CD14-positive monocyte (primary cell): ENCODE measurements at regions of chr3 and their contacts with region 1.

Region 1: GRCh38 chr3:58271901-58272501 is 34.0 kb upstream of the RPP14 start:
- DNase-seq: peak; percentile 57 to 71 (median 60)
- H3K4me3 ChIP-seq: no peak overlapping the region
- H3K4me3 Mint-ChIP-seq: no peak overlapping the region
- H3K27ac ChIP-seq: peak overlapping the region; percentile 38 to 75
- H3K27ac Mint-ChIP-seq: peak overlapping the region; percentile 78 to 91 (median 85)
- H3K4me1 ChIP-seq: peaks cover 28 to 33% of the 10 kb centered on the region in 2 donors
- H3K4me1 Mint-ChIP-seq: peaks cover 34% of the 10 kb centered on the region
- H3K27me3 ChIP-seq: no peaks in the 10 kb centered on the region
- H3K27me3 Mint-ChIP-seq: peaks cover 0 to 2% (median 0%) of the 10 kb centered on the region in 3 donors
- CTCF ChIP-seq: no peak

Region 2: GRCh38 chr3:58013973-58014649 is 257.9 kb before region 1 on chr3:
- intact Hi-C with region 1: no loop called
- DNase-seq: no peak
- H3K4me3 ChIP-seq: no peak overlapping the region
- H3K4me3 Mint-ChIP-seq: no peak overlapping the region
- H3K27ac ChIP-seq: no peak overlapping the region
- H3K27ac Mint-ChIP-seq: no peak overlapping the region
- H3K4me1 ChIP-seq: peaks cover 12 to 13% of the 10 kb centered on the region in 2 donors
- H3K4me1 Mint-ChIP-seq: peaks cover 35% of the 10 kb centered on the region
- H3K27me3 ChIP-seq: no peaks in the 10 kb centered on the region
- H3K27me3 Mint-ChIP-seq: peaks cover 0 to 3% (median 2%) of the 10 kb centered on the region in 3 donors
- CTCF ChIP-seq: no peak

Region 3: GRCh38 chr3:58237238-58237940 is 34.6 kb before region 1 on chr3 and contains the start of gene ABHD6:
- intact Hi-C with region 1: loop called in 1 of 2 experiments (anchors 5 kb)
- DNase-seq: peak; percentile 63 to 69 (median 65)
- H3K4me3 ChIP-seq: peak within 1 kb of the TSS; percentile 77 to 96 (median 93)
- H3K4me3 Mint-ChIP-seq: peak within 1 kb of the TSS; percentile 96
- H3K27ac ChIP-seq: peak within 1 kb of the TSS; percentile 48 to 78
- H3K27ac Mint-ChIP-seq: peak within 1 kb of the TSS; percentile 72 to 91 (median 87)
- H3K4me1 ChIP-seq: peaks cover 20 to 40% of the 10 kb centered on the region in 2 donors
- H3K4me1 Mint-ChIP-seq: peaks cover 46% of the 10 kb centered on the region
- H3K27me3 ChIP-seq: no peaks in the 10 kb centered on the region
- H3K27me3 Mint-ChIP-seq: peaks cover 2 to 12% (median 7%) of the 10 kb centered on the region in 3 donors
- CTCF ChIP-seq: no peak
- polyA plus RNA-seq, gene ABHD6: 7.3 to 11.6 (median 9.0) TPM